WTC11 (cell line): ENCODE measurements at regions of chr12 and their contacts with region 1.

Region 1: DNA sequence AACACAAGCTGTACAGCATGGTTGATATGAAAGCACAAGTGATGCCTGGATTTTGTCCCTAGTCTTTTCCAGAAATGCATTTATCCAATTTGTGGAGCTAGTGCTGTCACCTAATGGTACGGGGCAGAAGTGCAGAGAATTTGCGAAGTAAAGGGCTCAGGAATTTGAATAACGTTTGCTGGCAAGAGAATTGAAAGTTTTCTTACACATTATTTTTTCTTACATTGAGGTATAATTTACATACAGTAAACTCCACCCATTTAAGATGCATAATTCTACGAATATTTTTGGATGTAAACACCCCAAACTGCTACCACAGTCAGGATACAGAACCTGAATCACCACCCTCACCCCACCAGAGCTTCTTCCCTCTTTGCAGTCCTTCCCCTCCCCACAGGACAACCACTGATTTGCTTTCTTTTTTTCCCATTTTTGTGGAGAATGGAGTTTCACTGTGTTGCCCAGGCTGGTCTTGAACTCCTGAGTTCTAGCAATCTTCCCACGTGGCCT is 3.5 kb downstream of the AICDA start:
- DNase-seq: peak; percentile 33
- ATAC-seq: peak; percentile 61
- H3K4me3 Mint-ChIP-seq: no peak overlapping the region
- H3K27ac Mint-ChIP-seq: no peak overlapping the region
- H3K4me1 Mint-ChIP-seq: peaks cover 34% of the 10 kb centered on the region
- H3K27me3 Mint-ChIP-seq: peaks cover 6% of the 10 kb centered on the region
- CTCF ChIP-seq: peak; percentile 37; the same call in 1 of the 2 replicates

Region 2: GRCh38 chr12:8590842-8591550 is 18.1 kb before region 1 on chr12:
- CTCF ChIA-PET with region 1: interaction called, 14 read pairs
- POLR2A ChIA-PET with region 1: no interaction called
- DNase-seq: no peak
- ATAC-seq: peak; percentile 96
- H3K4me3 Mint-ChIP-seq: no peak overlapping the region
- H3K27ac Mint-ChIP-seq: no peak overlapping the region
- H3K4me1 Mint-ChIP-seq: peaks cover 9% of the 10 kb centered on the region
- H3K27me3 Mint-ChIP-seq: no peaks in the 10 kb centered on the region
- CTCF ChIP-seq: no peak

Region 3: DNA sequence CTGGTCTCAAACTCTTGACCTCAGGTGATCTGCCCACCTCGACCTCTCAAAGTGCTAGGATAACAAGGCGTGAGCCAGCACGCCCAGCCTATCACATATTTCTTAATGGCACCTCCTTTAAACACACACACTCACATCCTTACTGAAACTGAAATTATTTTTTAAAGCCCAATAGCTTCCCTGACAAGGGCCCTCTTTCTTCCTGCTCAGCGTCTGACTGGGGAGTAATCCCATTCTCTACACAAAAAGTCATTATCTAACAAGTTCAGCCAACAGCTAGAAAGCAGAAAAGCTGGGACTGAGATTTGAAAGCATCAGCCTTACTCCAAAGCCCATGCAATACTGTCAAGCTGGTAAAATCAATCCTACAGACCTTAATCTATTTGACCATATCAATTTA is 13.5 kb after region 1 on chr12:
- CTCF ChIA-PET with region 1: interaction called, 13 read pairs
- POLR2A ChIA-PET with region 1: no interaction called
- DNase-seq: no peak
- ATAC-seq: no peak
- H3K4me3 Mint-ChIP-seq: no peak overlapping the region
- H3K27ac Mint-ChIP-seq: no peak overlapping the region
- H3K4me1 Mint-ChIP-seq: peaks cover 5% of the 10 kb centered on the region
- H3K27me3 Mint-ChIP-seq: no peaks in the 10 kb centered on the region
- CTCF ChIP-seq: no peak

Region 4: DNA sequence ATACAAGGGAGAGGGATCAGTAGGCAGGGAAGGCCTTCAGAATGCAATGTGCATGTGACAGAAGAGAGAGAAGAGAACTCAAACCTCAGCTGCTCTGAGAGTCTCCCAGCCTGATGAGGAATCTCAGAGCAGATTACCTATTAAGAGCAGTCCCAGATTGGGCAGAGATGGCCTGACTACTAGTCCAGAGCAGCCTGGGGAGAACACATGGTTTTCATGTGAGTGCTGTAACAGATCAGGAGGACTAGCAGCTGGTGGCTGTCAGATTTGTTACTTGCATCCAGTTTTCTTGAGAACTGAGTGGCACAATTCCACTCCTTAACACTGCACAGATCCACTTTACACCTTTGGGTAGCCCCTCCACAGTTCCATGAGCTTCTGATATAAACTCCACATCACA is 175.4 kb after region 1 on chr12:
- CTCF ChIA-PET with region 1: no interaction called
- POLR2A ChIA-PET with region 1: no interaction called
- DNase-seq: no peak
- ATAC-seq: no peak; the same call in 1 of the 2 replicates
- H3K4me3 Mint-ChIP-seq: no peak overlapping the region
- H3K27ac Mint-ChIP-seq: peak overlapping the region; percentile 80
- H3K4me1 Mint-ChIP-seq: peaks cover 19% of the 10 kb centered on the region
- H3K27me3 Mint-ChIP-seq: no peaks in the 10 kb centered on the region; the same call in 1 of the 2 replicates
- CTCF ChIP-seq: no peak